IMR-90 (cell line): ENCODE measurements at regions of chr21 and their contacts with region 1.

Region 1: GRCh38 chr21:46104104-46104503 is 6.2 kb downstream of the COL6A2 start:
- DNase-seq: no peak
- ATAC-seq: no peak
- H3K4me3 ChIP-seq: no peak overlapping the region
- H3K27ac ChIP-seq: no peak overlapping the region
- H3K4me1 ChIP-seq: peaks cover 5% of the 10 kb centered on the region
- H3K27me3 ChIP-seq: no peaks in the 10 kb centered on the region
- CTCF ChIP-seq: no peak
- POLR2A ChIP-seq: no peak
- RAD21 ChIP-seq: no peak

Region 2: DNA sequence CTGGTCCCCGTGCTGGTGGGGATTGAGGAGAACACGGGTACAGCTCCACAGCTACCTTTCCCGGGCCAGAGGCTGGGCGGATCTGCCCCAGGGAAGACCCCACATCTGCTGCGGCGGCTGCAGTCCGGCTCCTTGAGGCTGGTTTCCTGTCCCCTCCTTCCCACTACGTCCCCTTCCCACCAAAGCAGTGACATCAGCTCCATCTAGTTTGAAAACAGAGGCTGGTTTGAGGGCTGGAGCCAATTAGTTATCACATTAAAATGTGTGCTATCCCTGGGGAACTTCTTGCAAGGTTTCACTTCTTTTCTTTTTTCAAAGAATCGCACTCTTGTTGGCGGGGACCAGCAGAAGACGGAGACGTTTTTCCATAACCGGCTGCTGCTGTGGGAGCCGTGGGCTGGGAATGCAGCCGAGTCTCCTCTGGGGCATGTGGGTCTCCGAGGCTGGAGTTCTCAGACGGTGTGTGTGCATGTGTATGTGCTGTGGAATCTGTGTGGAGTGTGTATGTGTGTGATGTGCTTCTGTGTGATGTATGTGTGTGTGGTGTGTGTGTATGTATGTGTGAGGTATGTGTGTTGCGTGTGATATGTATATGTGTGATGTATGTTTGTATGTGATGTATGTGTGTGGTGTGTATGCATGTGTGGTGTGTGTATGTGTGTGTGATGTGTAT is 469.5 kb before region 1 on chr21:
- CTCF ChIA-PET with region 1: no interaction called
- POLR2A ChIA-PET with region 1: no interaction called
- dilution Hi-C with region 1: no loop called
- in situ Hi-C with region 1: no loop called
- intact Hi-C with region 1: no loop called
- DNase-seq: peak; percentile 18
- ATAC-seq: no peak
- H3K4me3 ChIP-seq: no peak overlapping the region
- H3K27ac ChIP-seq: no peak overlapping the region
- H3K4me1 ChIP-seq: no peaks in the 10 kb centered on the region
- H3K27me3 ChIP-seq: peaks cover 26% of the 10 kb centered on the region
- CTCF ChIP-seq: no peak
- POLR2A ChIP-seq: no peak
- RAD21 ChIP-seq: no peak

Region 3: DNA sequence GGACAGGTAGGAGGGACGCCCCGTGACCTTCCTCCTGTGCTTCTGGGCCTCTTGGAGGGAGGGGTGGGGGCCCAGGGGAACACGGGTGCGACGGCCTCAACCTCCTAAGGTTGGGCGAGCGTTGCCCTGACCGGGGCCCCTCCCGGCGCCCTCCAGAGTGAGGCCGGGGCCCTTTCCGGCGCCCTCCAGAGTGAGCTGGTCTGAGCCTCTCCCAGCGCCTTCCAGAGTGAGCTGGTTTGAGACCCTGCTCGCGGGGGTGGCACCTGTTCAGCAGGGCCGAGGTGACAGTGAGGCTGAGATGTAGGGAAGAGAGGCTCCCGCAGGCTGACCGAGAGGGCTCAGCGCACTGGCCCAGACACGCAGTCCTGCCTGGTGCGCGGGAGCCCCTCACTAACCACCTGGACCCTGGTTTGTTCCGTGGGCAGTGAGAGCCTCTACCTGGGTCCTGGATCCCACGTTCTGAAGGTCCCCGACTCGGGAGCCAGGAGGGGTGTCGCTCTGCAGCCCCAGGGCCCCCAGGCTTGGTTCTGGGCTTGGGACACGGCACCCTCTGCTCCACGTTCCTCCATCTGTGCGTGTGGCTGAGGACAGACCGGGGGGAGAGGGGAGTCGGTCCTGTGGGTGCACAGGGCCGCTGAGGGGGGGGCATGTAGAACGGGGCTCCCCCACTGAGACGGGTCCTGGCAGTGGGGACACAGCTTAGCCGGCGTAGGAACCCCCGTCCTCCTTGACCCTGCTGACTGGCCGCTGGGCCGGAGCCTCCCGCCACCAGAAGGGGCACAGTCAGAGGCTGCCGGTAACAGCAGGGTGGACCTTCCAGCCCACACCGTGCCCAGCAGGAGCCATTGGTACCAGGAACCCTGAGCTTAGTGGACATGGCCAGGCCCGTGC is 121.1 kb before region 1 on chr21:
- CTCF ChIA-PET with region 1: no interaction called
- POLR2A ChIA-PET with region 1: no interaction called
- dilution Hi-C with region 1: no loop called
- in situ Hi-C with region 1: no loop called
- intact Hi-C with region 1: no loop called
- DNase-seq: no peak
- ATAC-seq: no peak; the same call in 1 of the 2 replicates
- H3K4me3 ChIP-seq: peak overlapping the region; percentile 95
- H3K27ac ChIP-seq: peak overlapping the region; percentile 99
- H3K4me1 ChIP-seq: peaks cover 29% of the 10 kb centered on the region
- H3K27me3 ChIP-seq: no peaks in the 10 kb centered on the region
- CTCF ChIP-seq: no peak
- POLR2A ChIP-seq: peak; percentile 5; the same call in 1 of the 2 replicates
- RAD21 ChIP-seq: no peak

Region 4: GRCh38 chr21:46079352-46080170 is 24.5 kb before region 1 on chr21:
- CTCF ChIA-PET with region 1: no interaction called
- POLR2A ChIA-PET with region 1: no interaction called
- dilution Hi-C with region 1: no loop called
- in situ Hi-C with region 1: no loop called
- intact Hi-C with region 1: no loop called
- DNase-seq: peak; percentile 96
- ATAC-seq: peak; percentile 87
- H3K4me3 ChIP-seq: no peak overlapping the region
- H3K27ac ChIP-seq: peak overlapping the region; percentile 95
- H3K4me1 ChIP-seq: peaks cover 24% of the 10 kb centered on the region
- H3K27me3 ChIP-seq: no peaks in the 10 kb centered on the region
- CTCF ChIP-seq: no peak
- POLR2A ChIP-seq: no peak
- RAD21 ChIP-seq: peak; percentile 24; the same call in 1 of the 2 replicates

Region 5: GRCh38 chr21:46122237-46122671 is 18.1 kb after region 1 on chr21:
- CTCF ChIA-PET with region 1: no interaction called
- POLR2A ChIA-PET with region 1: no interaction called
- dilution Hi-C with region 1: no loop called
- in situ Hi-C with region 1: no loop called
- intact Hi-C with region 1: no loop called
- DNase-seq: peak; percentile 78
- ATAC-seq: peak; percentile 36
- H3K4me3 ChIP-seq: no peak overlapping the region
- H3K27ac ChIP-seq: peak overlapping the region; percentile 34
- H3K4me1 ChIP-seq: peaks cover 9% of the 10 kb centered on the region; the same call in 1 of the 2 replicates
- H3K27me3 ChIP-seq: no peaks in the 10 kb centered on the region
- CTCF ChIP-seq: no peak
- POLR2A ChIP-seq: no peak; the same call in 1 of the 2 replicates
- RAD21 ChIP-seq: no peak

Region 6: DNA sequence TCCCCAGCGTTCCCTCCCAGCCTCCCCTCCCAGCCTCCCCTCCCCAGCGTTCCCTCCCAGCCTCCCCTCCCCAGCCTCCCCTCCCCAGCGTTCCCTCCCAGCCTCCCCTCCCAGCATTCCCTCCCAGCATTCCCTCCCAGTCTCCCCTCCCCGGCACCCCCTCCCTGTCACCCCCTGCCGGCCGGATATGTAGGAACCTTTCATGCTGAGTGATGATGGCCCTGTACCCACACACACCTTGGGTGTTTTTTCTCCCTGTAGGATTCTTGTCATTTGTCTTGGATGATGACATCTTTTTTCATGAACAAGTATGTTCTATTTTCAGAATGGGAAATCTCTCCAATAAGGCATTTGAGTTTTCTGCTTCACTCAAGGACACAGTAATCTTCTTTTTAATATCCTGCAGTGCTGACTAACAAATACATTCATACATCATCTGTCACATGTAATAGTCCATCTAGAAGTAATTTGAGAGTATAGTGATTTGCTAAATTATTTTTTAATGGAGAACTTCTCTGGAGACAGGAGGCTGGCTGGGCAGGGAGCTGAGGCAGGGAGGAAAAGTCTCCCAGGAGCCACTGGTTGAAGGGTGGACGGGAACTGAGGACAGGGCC is 31.8 kb after region 1 on chr21:
- CTCF ChIA-PET with region 1: no interaction called
- POLR2A ChIA-PET with region 1: no interaction called
- dilution Hi-C with region 1: no loop called
- in situ Hi-C with region 1: no loop called
- intact Hi-C with region 1: loop called (anchors 1 kb)
- DNase-seq: no peak
- ATAC-seq: no peak
- H3K4me3 ChIP-seq: no peak overlapping the region
- H3K27ac ChIP-seq: no peak overlapping the region
- H3K4me1 ChIP-seq: 0 out of 2 replicates have a peak, but pooled peaks cover 2% of the 10 kb centered on the region
- H3K27me3 ChIP-seq: no peaks in the 10 kb centered on the region
- CTCF ChIP-seq: no peak
- POLR2A ChIP-seq: no peak
- RAD21 ChIP-seq: no peak